ENCODE measurements at regions of chr5 and their contacts with region 1.

Region 1: GRCh38 chr5:79020861-79021561 is 35.9 kb upstream of the ARSB start:
- DNase-seq: peak; percentile 33
- H3K4me3 ChIP-seq: peak overlapping the region; percentile 29 to 38; a peak in 3 of 4 replicates
- H3K27ac ChIP-seq: peak overlapping the region in 1 of 2 experiments; percentile 60; a peak in 3 of 4 replicates
- H3K4me1 ChIP-seq: peaks cover 0 to 11% of the 10 kb centered on the region in 2 experiments; a peak in 3 of 4 replicates
- H3K27me3 ChIP-seq: no peaks in the 10 kb centered on the region
- CTCF ChIP-seq: peak; percentile 91
- EP300 ChIP-seq: peak in 1 of 2 experiments; percentile 22; a peak in 1 of 4 replicates
- RAD21 ChIP-seq: peak; percentile 88

Region 2: DNA sequence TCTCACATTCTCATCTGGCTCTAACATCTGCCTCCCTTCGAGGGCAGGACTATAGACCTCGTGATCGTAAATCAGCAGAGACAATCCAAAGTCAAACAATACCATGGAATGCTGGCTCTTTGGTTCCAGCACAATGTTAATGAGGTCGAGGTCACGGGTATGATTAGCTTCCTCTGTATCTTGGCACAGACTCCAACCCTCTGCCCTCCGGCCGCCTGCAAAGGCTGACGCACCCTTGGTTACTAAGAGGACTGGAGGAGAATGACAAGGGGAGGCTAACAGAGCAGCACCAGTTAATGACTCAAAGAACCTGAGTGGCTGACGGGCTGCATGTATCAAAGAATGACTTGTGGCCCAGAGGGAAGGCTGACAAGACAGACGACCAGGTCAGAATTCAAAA is 382.6 kb before region 1 on chr5:
- CTCF ChIA-PET with region 1: no interaction called
- POLR2A ChIA-PET with region 1: no interaction called
- DNase-seq: peak; percentile 64
- H3K4me3 ChIP-seq: no peak overlapping the region
- H3K27ac ChIP-seq: peak overlapping the region; percentile 74 to 92
- H3K4me1 ChIP-seq: peaks cover 45 to 52% of the 10 kb centered on the region in 2 experiments
- H3K27me3 ChIP-seq: no peaks in the 10 kb centered on the region
- CTCF ChIP-seq: no peak
- EP300 ChIP-seq: peak; percentile 41 to 80; a peak in 2 of 4 replicates
- RAD21 ChIP-seq: no peak

Region 3: DNA sequence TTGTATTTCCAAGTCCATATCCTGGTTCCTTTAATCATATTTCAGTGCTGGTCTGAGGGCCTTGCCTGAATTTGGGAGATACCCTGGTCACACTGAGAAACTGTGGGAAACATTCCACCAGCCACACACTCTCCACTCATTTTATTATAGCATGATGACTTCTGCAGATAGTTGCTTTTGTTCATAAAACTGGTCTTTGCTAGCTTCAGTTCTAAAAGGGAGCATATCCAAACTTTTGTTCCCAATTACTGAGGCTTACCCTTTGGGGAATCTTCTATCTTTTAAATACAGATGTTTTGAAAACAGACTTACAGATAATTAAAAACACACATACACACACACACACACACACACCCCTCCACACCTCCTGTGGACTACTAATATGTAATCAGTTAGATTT is 27.4 kb after region 1 on chr5:
- CTCF ChIA-PET with region 1: interaction called, 26 read pairs
- POLR2A ChIA-PET with region 1: no interaction called
- DNase-seq: no peak
- H3K4me3 ChIP-seq: no peak overlapping the region
- H3K27ac ChIP-seq: peak overlapping the region in 1 of 2 experiments; percentile 51; a peak in 2 of 4 replicates
- H3K4me1 ChIP-seq: peaks cover 0 to 9% of the 10 kb centered on the region in 2 experiments; a peak in 2 of 4 replicates
- H3K27me3 ChIP-seq: no peaks in the 10 kb centered on the region; the same call in 1 of the 2 replicates
- CTCF ChIP-seq: no peak
- EP300 ChIP-seq: no peak
- RAD21 ChIP-seq: no peak

Region 4: DNA sequence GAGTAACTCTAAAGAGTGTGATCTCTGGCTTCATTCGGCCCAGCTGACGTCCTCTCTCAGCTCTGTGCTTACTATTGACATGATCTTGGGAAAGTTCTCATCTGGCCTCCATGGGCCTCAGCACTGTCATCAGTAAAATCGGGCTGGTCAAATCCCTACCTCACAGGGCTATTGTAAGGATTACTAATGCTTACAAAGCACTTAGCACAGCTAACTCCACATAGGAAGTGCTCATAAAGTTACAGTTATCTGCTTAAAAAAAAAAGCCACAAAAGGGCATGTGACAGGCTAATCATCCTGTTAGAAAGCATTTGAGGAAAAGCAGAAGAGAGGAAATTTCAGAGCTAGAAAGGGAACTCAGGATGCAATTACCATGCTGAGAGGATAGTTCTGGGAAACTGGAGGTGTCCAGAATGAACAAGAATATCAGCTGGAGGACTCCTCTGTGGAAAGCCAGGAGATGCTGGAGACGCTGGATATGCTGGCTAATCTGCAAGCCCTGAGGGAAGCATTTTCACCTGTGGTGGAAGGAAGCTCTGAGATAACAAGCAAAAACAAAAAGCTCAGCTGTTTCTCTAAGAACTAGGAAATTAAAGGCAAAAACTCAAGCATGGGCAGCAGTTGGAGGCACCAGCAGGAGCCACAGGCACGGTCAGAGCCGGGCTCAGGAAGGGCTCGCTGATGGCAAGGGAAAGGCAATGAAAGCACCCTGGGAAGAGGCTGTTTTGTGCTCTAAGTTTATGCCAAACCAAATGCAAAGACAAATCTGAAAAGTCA is 86.2 kb after region 1 on chr5:
- CTCF ChIA-PET with region 1: interaction called, 24 read pairs
- POLR2A ChIA-PET with region 1: no interaction called
- DNase-seq: no peak
- H3K4me3 ChIP-seq: no peak overlapping the region
- H3K27ac ChIP-seq: peak overlapping the region in 1 of 2 experiments; percentile 48; a peak in 2 of 4 replicates
- H3K4me1 ChIP-seq: peaks cover 0 to 14% of the 10 kb centered on the region in 2 experiments; a peak in 2 of 4 replicates
- H3K27me3 ChIP-seq: peaks cover 2% of the 10 kb centered on the region; the same call in 1 of the 2 replicates
- CTCF ChIP-seq: no peak
- EP300 ChIP-seq: no peak
- RAD21 ChIP-seq: no peak

Region 5: GRCh38 chr5:79151942-79152671 is 131.1 kb after region 1 on chr5:
- CTCF ChIA-PET with region 1: interaction called, 93 read pairs
- POLR2A ChIA-PET with region 1: no interaction called
- DNase-seq: no peak
- H3K4me3 ChIP-seq: no peak overlapping the region
- H3K27ac ChIP-seq: no peak overlapping the region
- H3K4me1 ChIP-seq: no peaks in the 10 kb centered on the region
- H3K27me3 ChIP-seq: no peaks in the 10 kb centered on the region
- CTCF ChIP-seq: no peak
- EP300 ChIP-seq: no peak
- RAD21 ChIP-seq: no peak

Region 6: GRCh38 chr5:79225026-79225425 is 204.0 kb after region 1 on chr5:
- CTCF ChIA-PET with region 1: no interaction called
- POLR2A ChIA-PET with region 1: no interaction called
- DNase-seq: no peak
- H3K4me3 ChIP-seq: no peak overlapping the region
- H3K27ac ChIP-seq: no peak overlapping the region
- H3K4me1 ChIP-seq: no peaks in the 10 kb centered on the region; a peak in 1 of 4 replicates
- H3K27me3 ChIP-seq: no peaks in the 10 kb centered on the region
- CTCF ChIP-seq: no peak
- EP300 ChIP-seq: no peak
- RAD21 ChIP-seq: no peak

Region 7: GRCh38 chr5:79448336-79448735 is 427.3 kb after region 1 on chr5:
- CTCF ChIA-PET with region 1: interaction called, 15 read pairs
- POLR2A ChIA-PET with region 1: no interaction called
- DNase-seq: no peak
- H3K4me3 ChIP-seq: no peak overlapping the region
- H3K27ac ChIP-seq: no peak overlapping the region
- H3K4me1 ChIP-seq: peaks cover 0 to 12% of the 10 kb centered on the region in 2 experiments; a peak in 2 of 4 replicates
- H3K27me3 ChIP-seq: no peaks in the 10 kb centered on the region
- CTCF ChIP-seq: no peak
- EP300 ChIP-seq: no peak
- RAD21 ChIP-seq: no peak

Region 8: DNA sequence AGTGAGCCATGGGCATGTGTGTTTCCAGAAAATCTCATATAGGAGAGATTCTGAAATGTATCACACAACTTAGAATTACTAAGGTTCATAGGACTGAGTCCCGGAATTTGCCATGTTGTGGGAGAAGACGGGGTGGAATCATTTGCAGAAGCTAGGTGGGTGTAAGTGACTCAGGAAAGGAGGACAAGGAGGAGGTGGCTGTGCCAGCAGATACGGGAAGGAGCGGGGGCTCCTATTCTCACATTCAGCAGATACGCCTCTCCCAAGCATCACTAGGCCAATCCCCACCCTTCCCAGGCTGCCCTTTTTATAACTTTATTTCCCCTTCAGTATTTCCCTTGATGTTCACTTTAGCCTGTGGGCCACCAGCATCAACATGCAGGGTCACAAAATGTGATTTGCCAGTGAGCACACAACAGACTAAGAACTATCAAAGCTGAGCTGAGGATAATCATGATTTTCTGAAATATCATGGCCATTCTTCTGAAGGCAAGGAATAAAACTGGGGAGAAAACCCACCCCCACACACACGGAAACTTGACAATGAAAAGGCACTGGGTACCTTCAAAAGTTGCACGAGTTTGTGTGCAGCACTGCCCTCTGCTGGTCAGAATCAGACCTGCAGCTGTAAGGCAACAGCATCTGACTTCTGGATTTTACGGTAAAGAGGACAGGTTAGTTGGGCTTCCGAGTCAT is 836.9 kb after region 1 on chr5:
- CTCF ChIA-PET with region 1: interaction called, 11 read pairs
- POLR2A ChIA-PET with region 1: no interaction called
- DNase-seq: peak; percentile 47
- H3K4me3 ChIP-seq: peak overlapping the region in 1 of 2 experiments; percentile 19; a peak in 1 of 4 replicates
- H3K27ac ChIP-seq: no peak overlapping the region
- H3K4me1 ChIP-seq: no peaks in the 10 kb centered on the region; a peak in 1 of 4 replicates
- H3K27me3 ChIP-seq: no peaks in the 10 kb centered on the region; the same call in 1 of the 2 replicates
- CTCF ChIP-seq: peak; percentile 98
- EP300 ChIP-seq: no peak
- RAD21 ChIP-seq: peak; percentile 87

Measured in SK-N-SH (cell line).